A673 (cell line): ENCODE measurements at regions of chrX and their contacts with region 1.

Region 1: GRCh38 chrX:34300871-34301270 is 168.8 kb upstream of the FAM47A start:
- DNase-seq: peak; percentile 60
- H3K4me3 ChIP-seq: no peak overlapping the region
- H3K27ac ChIP-seq: no peak overlapping the region
- H3K4me1 ChIP-seq: no peaks in the 10 kb centered on the region
- H3K27me3 ChIP-seq: no peaks in the 10 kb centered on the region
- CTCF ChIP-seq: peak; percentile 79

Region 2: DNA sequence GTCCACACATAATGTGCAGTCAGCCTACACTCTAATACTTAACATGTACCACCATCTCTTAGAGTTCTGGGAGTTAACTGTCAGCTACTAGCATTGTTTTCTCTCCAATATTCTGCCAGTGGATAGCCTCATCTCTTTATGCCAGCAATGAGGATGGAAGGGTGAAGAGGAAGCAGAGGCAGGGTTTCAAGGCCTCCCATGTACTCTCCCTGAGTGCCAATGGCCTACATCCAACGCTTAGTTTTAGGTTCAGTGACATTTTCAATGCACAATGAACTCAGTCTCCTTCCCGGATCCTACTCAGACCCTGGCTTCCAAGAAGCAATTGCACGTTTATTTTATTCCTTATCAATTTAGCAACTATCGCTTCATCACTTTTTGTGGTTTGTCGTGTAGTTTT is 1775.6 kb before region 1 on chrX:
- CTCF ChIA-PET with region 1: no interaction called
- POLR2A ChIA-PET with region 1: no interaction called
- intact Hi-C with region 1: loop called (anchors 5 kb)
- DNase-seq: no peak
- H3K4me3 ChIP-seq: no peak overlapping the region
- H3K27ac ChIP-seq: no peak overlapping the region
- H3K4me1 ChIP-seq: no peaks in the 10 kb centered on the region
- H3K27me3 ChIP-seq: peaks cover 5% of the 10 kb centered on the region
- CTCF ChIP-seq: no peak

Region 3: GRCh38 chrX:33434256-33435092 is 866.4 kb before region 1 on chrX:
- CTCF ChIA-PET with region 1: interaction called, 4 read pairs
- POLR2A ChIA-PET with region 1: no interaction called
- intact Hi-C with region 1: loop called (anchors 1 kb)
- DNase-seq: peak; percentile 63
- H3K4me3 ChIP-seq: no peak overlapping the region
- H3K27ac ChIP-seq: no peak overlapping the region
- H3K4me1 ChIP-seq: no peaks in the 10 kb centered on the region
- H3K27me3 ChIP-seq: no peaks in the 10 kb centered on the region
- CTCF ChIP-seq: peak; percentile 86